HEK293T (cell line): ENCODE measurements at regions of chr21 and their contacts with region 1.

Region 1: GRCh38 chr21:33924079-33924765 is 8.6 kb upstream of the ATP5PO start:
- DNase-seq: peak; percentile 82

Region 2: DNA sequence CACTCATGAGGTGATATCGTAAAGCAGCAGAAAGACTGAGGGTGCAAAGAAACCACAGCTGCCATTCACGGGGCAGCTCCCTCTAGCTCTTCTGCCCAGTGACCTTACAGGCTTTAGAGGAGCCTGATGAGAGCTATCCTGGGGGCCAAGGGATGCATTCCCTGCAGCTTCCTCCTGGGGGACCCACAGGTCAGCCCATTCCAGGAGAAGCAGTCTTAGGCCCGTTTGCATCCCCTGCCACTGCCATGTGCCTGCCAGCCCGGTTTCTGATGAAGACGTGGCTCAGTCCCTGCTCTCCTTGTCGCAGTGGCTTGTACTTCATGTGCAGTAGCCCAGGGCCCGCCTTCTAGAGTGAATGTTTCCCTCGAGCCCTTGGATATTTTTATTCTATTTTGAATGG is 31.4 kb before region 1 on chr21:
- CTCF ChIA-PET with region 1: no interaction called
- POLR2A ChIA-PET with region 1: no interaction called
- DNase-seq: peak; percentile 48

Region 3: DNA sequence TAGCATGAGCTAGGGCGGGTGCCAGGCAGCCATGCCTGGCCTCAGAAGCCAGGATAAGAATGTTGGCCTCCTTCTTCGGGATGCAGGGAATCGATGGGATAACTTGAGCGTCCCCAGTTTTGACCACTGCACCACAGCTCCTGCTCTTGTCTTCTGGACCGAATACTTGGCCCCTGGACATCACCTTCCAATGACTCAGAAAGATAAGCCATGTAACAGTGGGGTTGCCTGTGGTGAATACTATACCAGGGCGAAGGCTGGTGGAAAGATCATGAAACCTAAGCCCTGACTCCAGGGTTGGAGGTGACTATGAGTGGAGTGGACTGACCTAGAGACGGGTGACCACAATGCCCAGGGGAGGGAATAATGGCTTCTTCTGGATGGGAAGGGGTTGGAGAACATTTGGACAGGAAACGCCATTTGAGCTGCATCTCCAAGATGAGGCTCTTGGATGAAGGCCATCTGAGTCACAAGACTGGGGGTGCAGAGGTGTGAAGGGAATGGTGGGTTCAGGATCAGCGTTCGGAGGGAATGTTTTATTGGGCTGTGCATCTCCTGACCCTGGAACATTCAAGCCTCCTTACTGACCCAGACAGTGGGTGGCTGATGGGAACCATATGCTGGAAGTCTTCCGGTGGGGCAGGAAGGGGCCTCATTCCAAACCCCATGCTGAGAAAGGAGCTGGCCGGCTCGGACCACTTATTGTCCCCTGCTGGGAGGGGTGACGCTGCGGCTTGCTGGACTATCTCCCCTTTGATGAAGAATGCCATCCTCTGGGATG is 421.1 kb after region 1 on chr21:
- CTCF ChIA-PET with region 1: interaction called, 50 read pairs
- POLR2A ChIA-PET with region 1: no interaction called
- DNase-seq: no peak

Region 4: DNA sequence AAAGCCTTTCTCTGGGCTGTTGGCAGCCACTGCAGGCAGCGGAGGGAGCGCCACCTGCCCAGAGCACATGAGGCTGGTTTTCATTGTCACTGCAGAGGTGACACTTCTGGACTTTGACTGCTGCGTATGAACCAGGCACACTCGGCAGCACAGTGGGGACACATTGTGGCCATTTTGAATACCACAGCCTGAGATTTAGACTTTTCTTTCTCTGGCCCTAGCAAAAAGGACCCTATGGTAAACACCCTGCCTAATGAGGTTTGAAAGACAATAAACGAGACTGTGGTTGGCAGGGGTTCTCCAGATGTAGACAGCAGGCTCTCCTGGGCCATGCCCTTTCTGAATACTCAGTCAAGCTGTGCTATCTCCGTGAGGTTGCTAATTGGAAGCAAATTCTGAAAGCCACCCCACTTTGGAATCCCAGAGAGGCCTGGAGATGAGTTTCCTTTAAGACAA is 427.6 kb after region 1 on chr21:
- CTCF ChIA-PET with region 1: interaction called, 50 read pairs
- POLR2A ChIA-PET with region 1: interaction called, 3 read pairs
- DNase-seq: peak; percentile 76